ENCODE measurements at regions of chr11 and their contacts with region 1.

Region 1: GRCh38 chr11:130847517-130847916 is 68.8 kb downstream of the SNX19 start:
- DNase-seq: peak; percentile 36
- H3K4me3 Mint-ChIP-seq: peak overlapping the region; percentile 52
- H3K27ac Mint-ChIP-seq: peak overlapping the region; percentile 61
- H3K4me1 Mint-ChIP-seq: peaks cover 16% of the 10 kb centered on the region
- H3K27me3 Mint-ChIP-seq: no peaks in the 10 kb centered on the region
- CTCF ChIP-seq: no peak

Region 2: DNA sequence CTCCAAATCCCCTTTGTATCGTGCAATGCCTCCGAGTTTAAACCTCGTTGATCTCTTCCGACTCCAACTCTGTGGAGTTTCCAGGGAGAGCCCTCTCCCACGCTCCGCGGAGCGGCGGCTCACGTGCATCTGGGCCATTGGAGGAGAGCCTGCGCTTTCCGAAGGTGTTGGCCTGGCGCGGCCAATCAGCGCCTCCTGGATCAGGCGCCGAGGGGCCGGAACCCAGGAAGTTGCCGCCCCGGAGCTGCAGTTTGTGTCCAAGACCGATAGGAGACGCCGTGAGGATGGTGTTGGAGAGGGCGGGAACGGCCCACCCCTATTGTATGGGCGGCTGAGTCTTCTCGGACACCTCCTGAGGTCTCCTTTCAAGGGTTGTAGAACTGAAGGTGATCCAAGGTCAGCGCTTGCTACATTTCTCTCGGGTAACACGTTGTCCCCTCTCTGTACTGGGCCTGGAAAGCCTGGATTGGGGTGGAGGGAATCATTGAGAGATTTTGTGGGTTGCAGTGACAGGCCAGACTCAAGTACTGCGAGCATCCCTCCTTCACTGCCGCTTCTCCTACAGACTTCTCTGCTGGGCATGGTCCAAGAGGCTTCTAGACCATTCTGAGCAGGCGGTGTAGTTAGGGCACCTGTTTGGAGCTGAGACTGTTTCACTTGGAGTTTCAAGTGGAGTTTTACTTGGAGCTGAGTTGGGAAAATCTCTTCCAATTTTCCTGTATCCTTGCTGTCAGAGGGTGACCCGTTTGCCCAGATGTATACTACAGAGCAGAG is 397.3 kb before region 1 on chr11:
- CTCF ChIA-PET with region 1: no interaction called
- intact Hi-C with region 1: loop called (anchors 5 kb)
- DNase-seq: no peak
- H3K4me3 Mint-ChIP-seq: no peak overlapping the region
- H3K27ac Mint-ChIP-seq: no peak overlapping the region
- H3K4me1 Mint-ChIP-seq: no peaks in the 10 kb centered on the region
- H3K27me3 Mint-ChIP-seq: peaks cover 23% of the 10 kb centered on the region
- CTCF ChIP-seq: no peak

Region 3: GRCh38 chr11:130806746-130807145 is 40.8 kb before region 1 on chr11:
- CTCF ChIA-PET with region 1: no interaction called
- intact Hi-C with region 1: no loop called
- DNase-seq: no peak
- H3K4me3 Mint-ChIP-seq: no peak overlapping the region
- H3K27ac Mint-ChIP-seq: no peak overlapping the region
- H3K4me1 Mint-ChIP-seq: no peaks in the 10 kb centered on the region
- H3K27me3 Mint-ChIP-seq: no peaks in the 10 kb centered on the region
- CTCF ChIP-seq: no peak

Region 4: GRCh38 chr11:130932086-130932712 is 84.7 kb after region 1 on chr11:
- CTCF ChIA-PET with region 1: no interaction called
- intact Hi-C with region 1: no loop called
- DNase-seq: no peak
- H3K4me3 Mint-ChIP-seq: no peak overlapping the region
- H3K27ac Mint-ChIP-seq: no peak overlapping the region
- H3K4me1 Mint-ChIP-seq: no peaks in the 10 kb centered on the region
- H3K27me3 Mint-ChIP-seq: no peaks in the 10 kb centered on the region
- CTCF ChIP-seq: no peak

Region 5: GRCh38 chr11:131065435-131066413 is 218.2 kb after region 1 on chr11:
- CTCF ChIA-PET with region 1: no interaction called
- intact Hi-C with region 1: no loop called
- DNase-seq: no peak
- H3K4me3 Mint-ChIP-seq: no peak overlapping the region
- H3K27ac Mint-ChIP-seq: no peak overlapping the region
- H3K4me1 Mint-ChIP-seq: no peaks in the 10 kb centered on the region
- H3K27me3 Mint-ChIP-seq: peaks cover 42% of the 10 kb centered on the region
- CTCF ChIP-seq: no peak

Measured in Calu3 (cell line).